ENCODE measurements at regions of chr4 and their contacts with region 1.

Region 1: GRCh38 chr4:76198411-76199237 is 15.0 kb downstream of the SCARB2 start:
- DNase-seq: peak in 1 of 2 donors; percentile 70
- ATAC-seq: peak; percentile 48 to 73 (median 57)
- H3K4me3 ChIP-seq: peak overlapping the region; percentile 37
- H3K27ac ChIP-seq: peak overlapping the region; percentile 97
- H3K4me1 ChIP-seq: peaks cover 95% of the 10 kb centered on the region
- H3K27me3 ChIP-seq: no peaks in the 10 kb centered on the region
- CTCF ChIP-seq: no peak

Region 2: GRCh38 chr4:76235915-76236314 is 37.3 kb after region 1 on chr4:
- intact Hi-C with region 1: loop called in 1 of 2 experiments (anchors 5 kb)
- DNase-seq: no peak
- ATAC-seq: no peak
- H3K4me3 ChIP-seq: no peak overlapping the region
- H3K27ac ChIP-seq: peak overlapping the region; percentile 54
- H3K4me1 ChIP-seq: peaks cover 16% of the 10 kb centered on the region
- H3K27me3 ChIP-seq: no peaks in the 10 kb centered on the region
- CTCF ChIP-seq: no peak

Region 3: GRCh38 chr4:76301068-76301774 is 102.6 kb after region 1 on chr4:
- intact Hi-C with region 1: loop called (anchors 5 kb)
- DNase-seq: peak; percentile 34 to 51
- ATAC-seq: peak; percentile 87 to 90 (median 88)
- H3K4me3 ChIP-seq: peak overlapping the region; percentile 10
- H3K27ac ChIP-seq: peak overlapping the region; percentile 87
- H3K4me1 ChIP-seq: peaks cover 54% of the 10 kb centered on the region
- H3K27me3 ChIP-seq: no peaks in the 10 kb centered on the region
- CTCF ChIP-seq: no peak

Region 4: DNA sequence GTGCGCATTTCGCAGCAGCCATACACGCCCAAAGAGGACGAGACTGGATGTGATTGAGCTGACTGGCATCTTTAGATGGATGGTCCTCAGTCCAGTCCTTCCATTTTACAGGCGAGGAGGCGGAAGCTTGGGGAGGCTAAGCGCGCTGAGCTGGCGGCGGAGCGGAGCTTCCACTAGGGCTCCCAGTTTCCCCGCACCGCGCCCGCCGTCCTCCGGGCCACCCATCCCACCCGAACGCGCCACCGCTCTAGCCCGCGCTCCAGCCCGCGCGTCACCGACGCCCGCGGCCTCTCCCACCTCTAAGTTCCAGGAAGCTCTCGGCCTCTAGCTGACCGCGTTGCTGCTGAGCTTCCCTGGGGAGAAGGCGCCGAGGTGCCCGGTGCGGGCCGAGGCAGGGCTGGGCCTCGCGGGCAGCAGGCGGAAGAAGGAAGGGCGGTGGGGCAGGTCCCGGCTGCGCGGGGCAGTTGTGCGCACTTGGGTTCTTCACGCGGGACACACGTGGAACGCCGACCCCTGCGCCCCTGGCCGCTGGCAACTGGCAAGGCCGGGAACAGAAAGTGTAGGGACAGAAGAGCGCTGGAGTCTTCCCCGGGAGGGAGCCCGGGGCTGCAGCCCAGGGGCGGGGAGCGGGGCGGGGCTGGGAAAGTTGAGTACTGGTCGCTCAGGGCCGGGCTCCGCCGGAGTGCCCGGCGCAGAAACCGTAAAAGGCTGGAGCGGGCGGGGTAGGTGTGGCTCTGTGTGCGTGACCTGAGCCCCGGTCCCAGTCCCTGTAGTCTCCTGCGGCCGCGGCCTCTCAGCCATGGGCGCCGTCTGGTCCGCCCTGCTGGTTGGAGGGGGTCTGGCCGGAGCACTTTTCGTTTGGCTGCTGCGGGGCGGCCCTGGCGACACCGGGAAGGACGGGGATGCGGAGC is 107.6 kb after region 1 on chr4 and contains the start of gene STBD1:
- intact Hi-C with region 1: loop called (anchors 5 kb)
- DNase-seq: peak; percentile 83 to 90
- ATAC-seq: peak; percentile 81 to 85 (median 84)
- H3K4me3 ChIP-seq: peak within 1 kb of the TSS; percentile 97
- H3K27ac ChIP-seq: peak within 1 kb of the TSS; percentile 98
- H3K4me1 ChIP-seq: peaks cover 66% of the 10 kb centered on the region
- H3K27me3 ChIP-seq: no peaks in the 10 kb centered on the region
- CTCF ChIP-seq: no peak
- total RNA-seq, gene STBD1: 39.8 to 59.7 (median 47.2) TPM